Esophagus muscularis mucosa (tissue), 4 donors: ENCODE measurements at regions of chr1 and their contacts with region 1.

Region 1: DNA sequence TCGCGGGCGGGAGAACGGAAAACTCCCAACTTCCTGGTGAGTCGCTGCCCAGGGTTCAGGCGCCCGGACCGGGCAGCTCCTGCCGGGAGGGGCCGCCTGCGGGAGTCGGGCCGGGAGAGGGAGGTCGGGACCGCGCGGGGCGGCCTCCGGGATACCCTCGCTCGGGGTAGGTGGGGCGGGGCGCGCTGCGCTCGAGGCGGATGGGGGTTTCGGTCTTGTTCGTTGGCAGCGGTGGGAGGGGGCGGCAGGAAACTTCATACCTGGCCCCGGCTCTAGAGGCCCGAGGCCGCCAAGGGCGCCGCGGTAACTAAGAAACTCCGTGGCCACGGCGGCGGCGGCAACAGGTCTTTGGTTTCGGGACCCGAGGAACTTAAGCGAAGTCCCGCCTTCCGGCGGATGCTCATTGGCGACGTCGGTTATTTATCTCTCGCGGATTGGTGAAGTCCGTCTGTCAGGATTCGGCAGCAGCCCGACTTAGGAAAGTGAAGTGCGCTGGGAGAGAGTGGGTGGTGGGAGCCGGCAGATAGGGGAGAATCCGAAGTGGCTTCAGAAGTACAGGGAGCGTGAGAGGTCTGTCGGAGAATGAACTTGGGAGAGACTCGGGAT is 546 bp downstream of the NEK7 start:
- DNase-seq: peak; percentile 95
- H3K4me3 ChIP-seq: peak overlapping the region; percentile 80 to 95 (median 91)
- H3K27ac ChIP-seq: peak overlapping the region; percentile 97 to 98 (median 98)
- H3K4me1 ChIP-seq: peaks cover 33 to 53% (median 38%) of the 10 kb centered on the region in 4 donors
- H3K27me3 ChIP-seq: no peaks in the 10 kb centered on the region
- CTCF ChIP-seq: no peak
- EP300 ChIP-seq: no peak
- POLR2A ChIP-seq: no peak

Region 2: GRCh38 chr1:197195100-197195499 is 962.2 kb before region 1 on chr1:
- intact Hi-C with region 1: loop called (anchors 5 kb)
- DNase-seq: no peak
- H3K4me3 ChIP-seq: no peak overlapping the region
- H3K27ac ChIP-seq: no peak overlapping the region
- H3K4me1 ChIP-seq: peaks cover 24 to 51% (median 49%) of the 10 kb centered on the region in 4 donors
- H3K27me3 ChIP-seq: no peaks in the 10 kb centered on the region
- CTCF ChIP-seq: no peak
- EP300 ChIP-seq: no peak
- POLR2A ChIP-seq: no peak

Region 3: DNA sequence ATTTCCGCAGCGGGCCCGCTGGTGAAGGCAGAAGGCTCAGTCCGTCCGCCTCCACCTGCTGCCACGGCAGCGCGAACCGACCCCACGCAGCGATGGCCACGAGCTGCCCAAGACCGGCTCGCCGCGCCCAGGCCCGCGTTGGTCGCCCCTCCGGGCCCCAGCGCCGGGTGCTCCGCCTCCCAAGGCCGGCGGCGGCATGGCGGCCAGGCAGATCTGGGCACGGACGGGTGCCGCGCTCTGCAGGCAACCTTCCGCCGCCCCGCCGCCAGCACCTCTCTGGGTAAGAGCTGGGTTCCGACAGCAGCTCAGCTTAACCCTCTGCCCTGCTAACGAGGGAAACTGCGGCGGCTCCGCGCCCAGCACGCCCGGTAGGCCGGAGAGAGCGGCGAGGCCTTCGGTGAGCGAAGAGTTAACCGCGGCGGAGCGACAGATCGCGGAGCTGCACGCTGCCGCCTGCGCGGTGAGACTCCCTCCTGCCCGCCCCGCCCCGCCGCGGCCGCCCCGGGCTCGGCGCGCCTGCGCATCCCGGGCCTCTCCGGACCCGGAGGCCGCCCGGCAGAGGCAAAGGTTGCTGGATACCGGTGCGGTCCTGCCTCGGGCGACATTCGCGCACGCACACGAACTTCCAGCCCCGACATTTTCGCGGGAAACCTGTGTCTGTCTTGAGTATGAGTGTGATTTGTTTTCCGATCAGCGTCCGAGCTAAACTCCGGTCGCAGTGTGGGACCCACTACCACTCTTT is 254.7 kb before region 1 on chr1 and contains the start of gene C1orf53:
- intact Hi-C with region 1: loop called (anchors 10 kb)
- DNase-seq: no peak
- H3K4me3 ChIP-seq: peak within 1 kb of the TSS; percentile 75 to 81 (median 79)
- H3K27ac ChIP-seq: peak within 1 kb of the TSS; percentile 83 to 88 (median 88)
- H3K4me1 ChIP-seq: peaks cover 5 to 16% (median 10%) of the 10 kb centered on the region in 4 donors
- H3K27me3 ChIP-seq: peaks cover 0 to 32% (median 9%) of the 10 kb centered on the region in 4 donors
- CTCF ChIP-seq: peak in 1 of 3 experiments; percentile 11
- EP300 ChIP-seq: no peak
- POLR2A ChIP-seq: no peak
- total RNA-seq, gene C1orf53: 0.83 to 5.4 TPM in 2 of 4 donors, not detected in the others

Region 4: GRCh38 chr1:198291036-198291435 is 133.7 kb after region 1 on chr1:
- intact Hi-C with region 1: loop called (anchors 5 kb)
- DNase-seq: no peak
- H3K4me3 ChIP-seq: no peak overlapping the region
- H3K27ac ChIP-seq: peak overlapping the region in 1 of 4 donors; percentile 4
- H3K4me1 ChIP-seq: peaks cover 25 to 44% (median 34%) of the 10 kb centered on the region in 4 donors
- H3K27me3 ChIP-seq: no peaks in the 10 kb centered on the region
- CTCF ChIP-seq: no peak
- EP300 ChIP-seq: no peak
- POLR2A ChIP-seq: no peak